ENCODE measurements at regions of chr1 and their contacts with region 1.

Region 1: GRCh38 chr1:151059078-151059907 is at the start of gene CDC42SE1:
- DNase-seq: peak; percentile 93

Region 2: GRCh38 chr1:151047925-151048645 is 11.2 kb before region 1 on chr1:
- CTCF ChIA-PET with region 1: interaction called, 3 read pairs
- POLR2A ChIA-PET with region 1: interaction called, 53 read pairs
- DNase-seq: peak; percentile 86

Region 3: DNA sequence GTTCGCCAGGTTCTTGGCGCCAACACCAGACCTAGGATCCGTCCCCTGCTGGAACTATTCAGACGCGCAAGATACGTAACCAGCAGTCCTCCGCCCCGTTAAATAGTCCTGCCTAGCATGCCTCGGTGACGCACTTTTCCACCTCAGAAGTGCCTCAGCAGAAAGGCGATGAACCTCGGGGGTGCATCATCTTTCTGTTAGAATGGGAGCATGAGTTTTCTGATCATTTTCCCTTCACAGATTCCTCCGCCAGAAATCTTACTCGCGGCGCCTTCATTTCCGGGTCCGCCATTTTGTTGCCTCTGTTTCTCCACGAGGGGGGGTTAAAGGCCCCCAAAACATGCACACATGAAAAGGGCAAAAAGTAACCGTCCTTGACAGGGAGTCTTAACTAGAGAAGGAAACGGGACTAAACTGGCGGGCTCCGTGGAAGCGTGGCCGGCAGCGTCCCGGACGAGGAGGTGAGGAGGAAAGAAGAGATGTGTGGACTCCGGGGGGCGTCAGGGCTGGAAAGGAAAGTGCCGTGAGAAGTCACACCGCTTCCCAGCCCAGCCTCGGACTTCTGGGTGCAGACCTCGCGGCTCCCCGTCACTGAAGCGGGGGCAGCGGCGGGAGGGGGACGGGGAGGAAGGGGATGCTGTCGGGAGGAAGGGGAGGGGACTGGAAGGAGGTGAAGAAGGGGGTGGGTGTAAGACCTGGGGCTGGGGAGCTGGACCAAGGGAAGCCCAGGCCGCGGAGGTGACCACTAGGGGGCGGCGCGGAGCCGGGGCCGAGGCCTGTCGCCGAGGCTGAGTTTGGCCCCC is 11.4 kb after region 1 on chr1 and contains the start of gene GABPB2:
- CTCF ChIA-PET with region 1: interaction called, 5 read pairs
- POLR2A ChIA-PET with region 1: interaction called, 69 read pairs
- DNase-seq: peak; percentile 92